Transverse colon (tissue), 4 donors: ENCODE measurements at regions of chr9 and their contacts with region 1.

Region 1: GRCh38 chr9:36328798-36329411 is 70.7 kb upstream of the GNE start:
- DNase-seq: peak; percentile 34
- H3K4me3 ChIP-seq: no peak overlapping the region
- H3K27ac ChIP-seq: peak overlapping the region in 1 of 4 donors; percentile 50
- H3K4me1 ChIP-seq: peaks cover 0 to 12% (median 6%) of the 10 kb centered on the region in 4 donors
- H3K27me3 ChIP-seq: no peaks in the 10 kb centered on the region
- CTCF ChIP-seq: peak; percentile 78 to 95 (median 82)
- EP300 ChIP-seq: no peak
- POLR2A ChIP-seq: no peak

Region 2: DNA sequence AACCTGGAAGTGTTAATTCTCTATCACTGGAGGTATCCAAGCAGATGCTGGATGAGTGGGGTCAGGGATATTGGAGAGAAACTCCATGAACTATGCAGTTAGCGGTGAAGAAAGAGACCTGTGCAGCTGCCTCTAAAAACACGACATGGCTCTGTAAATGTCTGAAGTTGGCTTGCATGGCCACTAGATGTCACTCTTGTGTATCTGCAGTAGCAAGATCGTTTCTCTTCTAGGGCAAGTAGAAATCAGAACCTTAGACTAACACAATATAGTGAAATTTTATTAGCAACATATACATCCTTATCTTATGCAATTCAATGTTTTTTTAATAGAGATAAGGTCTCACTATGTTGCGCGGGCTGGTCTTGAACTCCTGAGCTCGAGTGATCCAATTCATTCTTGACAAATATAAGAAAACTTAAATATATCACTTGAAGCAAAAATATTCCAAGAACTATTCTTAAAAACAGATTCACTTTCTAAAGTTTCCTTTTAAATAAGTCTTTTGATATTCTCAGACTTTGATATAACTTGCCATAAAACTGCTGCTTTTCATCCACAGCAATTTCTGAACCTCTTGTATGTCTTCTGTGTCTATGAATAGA is 373.9 kb before region 1 on chr9:
- in situ Hi-C with region 1: loop called in 1 of 4 experiments (anchors 25 kb)
- intact Hi-C with region 1: no loop called
- DNase-seq: peak; percentile 68
- H3K4me3 ChIP-seq: no peak overlapping the region
- H3K27ac ChIP-seq: no peak overlapping the region
- H3K4me1 ChIP-seq: peaks cover 0 to 14% (median 5%) of the 10 kb centered on the region in 4 donors
- H3K27me3 ChIP-seq: no peaks in the 10 kb centered on the region
- CTCF ChIP-seq: peak; percentile 85 to 89 (median 88)
- EP300 ChIP-seq: no peak
- POLR2A ChIP-seq: no peak

Region 3: DNA sequence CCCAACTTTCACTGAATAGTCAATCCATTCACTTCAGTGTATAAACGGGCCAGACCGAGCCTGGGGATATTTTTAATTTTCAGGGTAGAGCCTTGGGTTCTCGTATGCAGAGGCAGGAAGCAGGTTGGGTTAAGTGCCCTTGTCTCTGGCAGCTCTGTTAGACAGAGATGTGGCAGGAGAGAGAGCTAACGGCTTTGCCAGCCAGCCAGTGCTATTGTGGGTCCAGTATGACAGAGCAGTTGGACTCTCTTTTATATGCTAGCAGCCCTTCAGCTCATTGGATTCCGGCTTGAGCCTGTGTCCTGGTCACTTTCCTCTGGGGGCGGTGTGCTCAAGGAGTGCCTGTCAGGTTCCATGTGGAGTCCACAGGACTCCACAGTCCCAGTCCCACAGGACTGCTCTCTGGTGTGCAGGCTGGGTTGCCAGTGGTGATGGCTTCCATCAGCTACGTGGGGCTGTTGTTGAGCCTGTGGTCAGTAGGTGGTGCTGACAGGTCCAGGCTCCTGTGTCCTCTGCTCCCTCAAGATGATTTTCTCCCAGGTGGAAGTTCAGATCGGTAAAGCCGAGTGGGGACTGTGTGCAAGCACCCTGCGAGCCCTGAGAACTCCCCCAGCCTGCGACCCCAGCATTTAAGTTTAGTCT is 123.9 kb before region 1 on chr9:
- in situ Hi-C with region 1: loop called in 1 of 4 experiments (anchors 25 kb)
- intact Hi-C with region 1: no loop called
- DNase-seq: no peak
- H3K4me3 ChIP-seq: no peak overlapping the region
- H3K27ac ChIP-seq: no peak overlapping the region
- H3K4me1 ChIP-seq: peaks cover 0 to 14% (median 6%) of the 10 kb centered on the region in 4 donors
- H3K27me3 ChIP-seq: no peaks in the 10 kb centered on the region
- CTCF ChIP-seq: peak in 2 of 5 experiments; percentile 9 to 14
- EP300 ChIP-seq: no peak
- POLR2A ChIP-seq: no peak

Region 4: GRCh38 chr9:36250079-36250478 is 78.8 kb before region 1 on chr9:
- in situ Hi-C with region 1: loop called in 2 of 4 experiments (anchors 5 to 10 kb)
- intact Hi-C with region 1: loop called (anchors 10 kb)
- DNase-seq: no peak
- H3K4me3 ChIP-seq: no peak overlapping the region
- H3K27ac ChIP-seq: no peak overlapping the region
- H3K4me1 ChIP-seq: peaks cover 0 to 17% (median 11%) of the 10 kb centered on the region in 4 donors
- H3K27me3 ChIP-seq: no peaks in the 10 kb centered on the region
- CTCF ChIP-seq: no peak
- EP300 ChIP-seq: no peak
- POLR2A ChIP-seq: no peak

Region 5: DNA sequence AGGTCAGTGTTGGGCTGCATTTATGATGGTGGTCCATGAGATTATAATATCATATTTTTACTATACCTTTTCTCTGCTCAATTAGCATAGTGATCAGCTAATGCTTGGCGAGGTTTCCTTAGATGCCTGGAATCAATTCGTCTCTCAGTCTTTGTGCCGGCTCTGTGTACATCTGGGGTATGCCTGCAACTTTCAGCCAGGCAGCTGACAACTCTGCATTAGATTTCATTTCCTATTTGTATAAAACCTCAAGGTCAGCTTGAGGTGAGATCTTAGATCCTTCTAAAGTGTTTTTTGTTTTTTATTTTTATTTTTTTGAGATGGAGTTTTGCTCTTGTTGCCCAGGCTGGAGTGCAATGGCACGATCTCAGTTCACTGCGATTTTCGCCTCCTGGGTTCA is 330.6 kb after region 1 on chr9:
- in situ Hi-C with region 1: no loop called
- intact Hi-C with region 1: no loop called
- DNase-seq: no peak
- H3K4me3 ChIP-seq: no peak overlapping the region
- H3K27ac ChIP-seq: no peak overlapping the region
- H3K4me1 ChIP-seq: no peaks in the 10 kb centered on the region
- H3K27me3 ChIP-seq: no peaks in the 10 kb centered on the region
- CTCF ChIP-seq: no peak
- EP300 ChIP-seq: no peak
- POLR2A ChIP-seq: no peak